Activated B cell treated with CpG ODN at 0.5 μM for 24 hours (primary cell): ENCODE measurements at regions of chr11 and their contacts with region 1.

Region 1: GRCh38 chr11:16738193-16738946 is at the start of gene C11orf58:
- DNase-seq: peak; percentile 86
- ATAC-seq: peak; percentile 97
- H3K4me3 Mint-ChIP-seq: peak within 1 kb of the TSS; percentile 74
- H3K27ac Mint-ChIP-seq: no peak within 1 kb of the TSS
- H3K4me1 Mint-ChIP-seq: peaks cover 21% of the 10 kb centered on the region
- H3K27me3 Mint-ChIP-seq: no peaks in the 10 kb centered on the region
- CTCF ChIP-seq: no peak
- total RNA-seq, gene C11orf58: 112 and 130 TPM in 2 replicates

Region 2: GRCh38 chr11:16613512-16614381 is 124.6 kb before region 1 on chr11:
- CTCF ChIA-PET with region 1: no interaction called
- POLR2A ChIA-PET with region 1: no interaction called
- intact Hi-C with region 1: no loop called
- DNase-seq: peak; percentile 28
- ATAC-seq: peak; percentile 75
- H3K4me3 Mint-ChIP-seq: peak overlapping the region; percentile 64
- H3K27ac Mint-ChIP-seq: no peak overlapping the region
- H3K4me1 Mint-ChIP-seq: peaks cover 20% of the 10 kb centered on the region
- H3K27me3 Mint-ChIP-seq: peaks cover 51% of the 10 kb centered on the region
- CTCF ChIP-seq: no peak

Region 3: DNA sequence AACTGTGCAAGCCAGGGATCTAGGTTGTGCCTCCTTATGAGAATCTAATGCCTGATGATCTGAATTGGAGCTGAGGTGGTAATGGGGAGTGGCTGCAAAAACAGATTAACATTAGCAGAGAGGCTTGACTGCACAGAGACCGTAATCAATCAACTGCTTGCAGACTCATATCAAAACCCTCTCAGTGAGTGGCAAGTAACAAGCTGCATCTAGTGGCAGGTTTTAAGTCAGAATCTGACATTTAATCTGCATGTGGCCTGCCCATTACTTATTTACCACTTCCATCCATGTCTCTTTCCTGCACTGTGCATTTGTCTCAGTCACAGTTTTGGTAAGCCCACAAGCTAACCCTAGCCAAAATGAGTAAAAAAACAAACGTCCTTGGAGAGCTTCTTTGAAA is 11.3 kb after region 1 on chr11:
- CTCF ChIA-PET with region 1: no interaction called
- POLR2A ChIA-PET with region 1: interaction called, 10 read pairs
- intact Hi-C with region 1: no loop called
- DNase-seq: no peak
- ATAC-seq: no peak
- H3K4me3 Mint-ChIP-seq: no peak overlapping the region
- H3K27ac Mint-ChIP-seq: no peak overlapping the region
- H3K4me1 Mint-ChIP-seq: peaks cover 9% of the 10 kb centered on the region
- H3K27me3 Mint-ChIP-seq: no peaks in the 10 kb centered on the region
- CTCF ChIP-seq: no peak

Region 4: GRCh38 chr11:17066691-17067090 is 328.3 kb after region 1 on chr11:
- CTCF ChIA-PET with region 1: no interaction called
- POLR2A ChIA-PET with region 1: no interaction called
- intact Hi-C with region 1: no loop called
- DNase-seq: no peak
- ATAC-seq: no peak
- H3K4me3 Mint-ChIP-seq: no peak overlapping the region
- H3K27ac Mint-ChIP-seq: no peak overlapping the region
- H3K4me1 Mint-ChIP-seq: peaks cover 3% of the 10 kb centered on the region
- H3K27me3 Mint-ChIP-seq: no peaks in the 10 kb centered on the region
- CTCF ChIP-seq: no peak

Region 5: GRCh38 chr11:17276236-17277023 is 538.1 kb after region 1 on chr11 and contains the start of gene NUCB2:
- CTCF ChIA-PET with region 1: no interaction called
- POLR2A ChIA-PET with region 1: interaction called, 5 read pairs
- intact Hi-C with region 1: loop called (anchors 1 kb)
- DNase-seq: peak; percentile 95
- ATAC-seq: peak; percentile 97
- H3K4me3 Mint-ChIP-seq: peak within 1 kb of the TSS; percentile 96
- H3K27ac Mint-ChIP-seq: peak within 1 kb of the TSS; percentile 85
- H3K4me1 Mint-ChIP-seq: peaks cover 20% of the 10 kb centered on the region
- H3K27me3 Mint-ChIP-seq: peaks cover 2% of the 10 kb centered on the region
- CTCF ChIP-seq: no peak
- total RNA-seq, gene NUCB2: 6.2 and 6.8 TPM in 2 replicates

Region 6: GRCh38 chr11:18012863-18013781 is 1274.8 kb after region 1 on chr11 and contains the start of gene SERGEF:
- CTCF ChIA-PET with region 1: no interaction called
- POLR2A ChIA-PET with region 1: interaction called, 3 read pairs
- intact Hi-C with region 1: loop called (anchors 2 kb)
- DNase-seq: peak; percentile 96
- ATAC-seq: peak; percentile 94
- H3K4me3 Mint-ChIP-seq: peak within 1 kb of the TSS; percentile 100
- H3K27ac Mint-ChIP-seq: peak within 1 kb of the TSS; percentile 99
- H3K4me1 Mint-ChIP-seq: peaks cover 16% of the 10 kb centered on the region
- H3K27me3 Mint-ChIP-seq: no peaks in the 10 kb centered on the region
- CTCF ChIP-seq: no peak
- total RNA-seq, gene SERGEF: 38.4 and 47.4 TPM in 2 replicates